ENCODE measurements at regions of chr14 and their contacts with region 1.

Region 1: DNA sequence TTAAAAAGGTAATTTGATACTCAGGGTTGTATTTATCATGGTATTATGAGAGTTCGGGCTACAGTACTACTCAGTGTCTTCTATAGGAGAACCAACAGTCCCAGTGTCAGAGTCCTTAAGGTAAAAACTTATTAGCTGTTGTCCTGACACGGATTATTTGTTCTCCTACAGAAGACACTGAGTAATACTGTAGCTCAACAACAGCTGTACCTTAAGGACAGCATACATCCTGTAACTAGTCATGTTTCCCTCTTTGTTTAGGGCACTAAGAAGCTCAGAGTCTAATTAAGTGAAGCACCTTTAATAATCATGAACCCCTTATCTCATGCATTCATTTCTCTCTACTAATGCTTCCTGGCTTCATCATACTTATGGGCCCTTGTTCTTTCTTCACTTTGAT is 33.9 kb downstream of the ARF6 start:
- DNase-seq: no peak
- ATAC-seq: no peak
- H3K4me3 ChIP-seq: no peak overlapping the region
- H3K4me3 Mint-ChIP-seq: no peak overlapping the region
- H3K27ac ChIP-seq: no peak overlapping the region
- H3K27ac Mint-ChIP-seq: no peak overlapping the region
- H3K4me1 ChIP-seq: peaks cover 0 to 2% of the 10 kb centered on the region in 2 experiments
- H3K4me1 Mint-ChIP-seq: peaks cover 2 to 14% (median 8%) of the 10 kb centered on the region in 3 donors
- H3K27me3 ChIP-seq: no peaks in the 10 kb centered on the region
- H3K27me3 Mint-ChIP-seq: no peaks in the 10 kb centered on the region

Region 2: GRCh38 chr14:49940808-49941421 is 14.1 kb after region 1 on chr14:
- CTCF ChIA-PET with region 1: no interaction called
- POLR2A ChIA-PET with region 1: interaction called in 1 of 2 experiments, 11 read pairs
- DNase-seq: peak in 12 of 35 experiments; percentile 7 to 47 (median 14)
- ATAC-seq: peak; percentile 52 to 80 (median 65)
- H3K4me3 ChIP-seq: no peak overlapping the region
- H3K4me3 Mint-ChIP-seq: peak overlapping the region; percentile 13 to 62 (median 21)
- H3K27ac ChIP-seq: peak overlapping the region; percentile 71
- H3K27ac Mint-ChIP-seq: peak overlapping the region; percentile 84 to 93
- H3K4me1 ChIP-seq: peaks cover 29 to 47% of the 10 kb centered on the region in 2 experiments
- H3K4me1 Mint-ChIP-seq: peaks cover 60 to 69% (median 68%) of the 10 kb centered on the region in 3 donors
- H3K27me3 ChIP-seq: no peaks in the 10 kb centered on the region
- H3K27me3 Mint-ChIP-seq: no peaks in the 10 kb centered on the region